Uterus (tissue), 4 donors: ENCODE measurements at regions of chr4 and their contacts with region 1.

Region 1: GRCh38 chr4:16023776-16024408 is 59.9 kb downstream of the PROM1 start:
- DNase-seq: no peak
- H3K4me3 ChIP-seq: no peak overlapping the region
- H3K27ac ChIP-seq: no peak overlapping the region
- H3K4me1 ChIP-seq: no peaks in the 10 kb centered on the region
- H3K27me3 ChIP-seq: no peaks in the 10 kb centered on the region
- CTCF ChIP-seq: no peak
- POLR2A ChIP-seq: no peak

Region 2: GRCh38 chr4:15479089-15479912 is 544.6 kb before region 1 on chr4:
- intact Hi-C with region 1: loop called (anchors 5 kb)
- DNase-seq: peak; percentile 59 to 67
- H3K4me3 ChIP-seq: peak overlapping the region; percentile 24 to 37
- H3K27ac ChIP-seq: peak overlapping the region; percentile 69 to 70
- H3K4me1 ChIP-seq: no peaks in the 10 kb centered on the region
- H3K27me3 ChIP-seq: no peaks in the 10 kb centered on the region
- CTCF ChIP-seq: peak; percentile 58 to 77 (median 72)
- POLR2A ChIP-seq: no peak

Region 3: GRCh38 chr4:16259889-16260246 is 236.0 kb after region 1 on chr4:
- intact Hi-C with region 1: loop called (anchors 5 kb)
- DNase-seq: no peak
- H3K4me3 ChIP-seq: no peak overlapping the region
- H3K27ac ChIP-seq: no peak overlapping the region
- H3K4me1 ChIP-seq: no peaks in the 10 kb centered on the region
- H3K27me3 ChIP-seq: no peaks in the 10 kb centered on the region
- CTCF ChIP-seq: no peak
- POLR2A ChIP-seq: no peak